Vagina (tissue), 2 donors: ENCODE measurements at regions of chr6 and their contacts with region 1.

Region 1: GRCh38 chr6:13487122-13488014 is at the start of gene GFOD1:
- DNase-seq: no peak
- H3K4me3 ChIP-seq: peak within 1 kb of the TSS; percentile 63 to 83
- H3K27ac ChIP-seq: peak within 1 kb of the TSS; percentile 82
- H3K4me1 ChIP-seq: peaks cover 28% of the 10 kb centered on the region
- H3K27me3 ChIP-seq: no peaks in the 10 kb centered on the region
- CTCF ChIP-seq: no peak
- POLR2A ChIP-seq: peak in 1 of 2 donors; percentile 76
- total RNA-seq, gene GFOD1: 16.9 TPM

Region 2: GRCh38 chr6:13375360-13375878 is 111.9 kb before region 1 on chr6:
- intact Hi-C with region 1: loop called (anchors 10 kb)
- DNase-seq: no peak
- H3K4me3 ChIP-seq: no peak overlapping the region
- H3K27ac ChIP-seq: no peak overlapping the region
- H3K4me1 ChIP-seq: peaks cover 30% of the 10 kb centered on the region
- H3K27me3 ChIP-seq: no peaks in the 10 kb centered on the region
- CTCF ChIP-seq: no peak
- POLR2A ChIP-seq: no peak

Region 3: GRCh38 chr6:13548500-13549210 is 61.3 kb after region 1 on chr6:
- intact Hi-C with region 1: no loop called
- DNase-seq: no peak
- H3K4me3 ChIP-seq: no peak overlapping the region
- H3K27ac ChIP-seq: no peak overlapping the region
- H3K4me1 ChIP-seq: no peaks in the 10 kb centered on the region
- H3K27me3 ChIP-seq: no peaks in the 10 kb centered on the region
- CTCF ChIP-seq: no peak
- POLR2A ChIP-seq: no peak